Activated T-helper 1 cell treated with anti-CD3 and anti-CD28 coated beads, Interleukin-12 subunit alpha, Interleukin-12 subunit beta, Interleukin-2, Interleukin-4 antibody, amounts not matched to agents 30 ng/mL and 10 ng/mL and 1 ng/mL, durations not matched to agents 14 hours and 24 hours and 36 hours (primary cell): ENCODE measurements at regions of chrX and their contacts with region 1.

Region 1: GRCh38 chrX:1165535-1166196 is 46.8 kb downstream of the CRLF2 start:
- DNase-seq: peak; percentile 28
- H3K4me3 Mint-ChIP-seq: peak overlapping the region; percentile 28
- H3K27ac Mint-ChIP-seq: no peak overlapping the region
- H3K4me1 Mint-ChIP-seq: peaks cover 16% of the 10 kb centered on the region
- H3K27me3 Mint-ChIP-seq: peaks cover 2% of the 10 kb centered on the region

Region 2: DNA sequence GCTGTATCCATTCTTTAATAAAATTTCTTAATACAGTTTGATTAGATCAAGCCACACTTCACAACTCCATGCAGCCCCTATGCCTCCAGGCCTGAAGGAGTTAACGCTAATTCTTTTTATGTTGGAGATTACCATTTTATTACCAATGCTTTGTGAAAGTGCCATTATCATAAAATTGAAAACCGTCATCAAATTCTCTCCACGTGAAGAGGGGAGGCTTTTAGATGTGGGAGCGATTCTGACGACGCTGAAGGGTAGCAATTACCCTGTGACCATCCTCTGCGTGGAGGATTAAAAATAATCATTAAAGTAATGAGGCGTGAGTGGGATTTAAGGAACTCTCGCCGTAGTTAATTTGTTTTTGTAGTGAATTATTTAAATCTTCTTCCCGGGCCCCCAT is 232.1 kb before region 1 on chrX:
- intact Hi-C with region 1: loop called (anchors 5 kb)
- DNase-seq: no peak
- H3K4me3 Mint-ChIP-seq: no peak overlapping the region
- H3K27ac Mint-ChIP-seq: no peak overlapping the region
- H3K4me1 Mint-ChIP-seq: no peaks in the 10 kb centered on the region
- H3K27me3 Mint-ChIP-seq: no peaks in the 10 kb centered on the region

Region 3: GRCh38 chrX:1011642-1012283 is 153.9 kb before region 1 on chrX:
- intact Hi-C with region 1: loop called (anchors 10 kb)
- DNase-seq: no peak
- H3K4me3 Mint-ChIP-seq: no peak overlapping the region
- H3K27ac Mint-ChIP-seq: peak overlapping the region; percentile 19
- H3K4me1 Mint-ChIP-seq: no peaks in the 10 kb centered on the region
- H3K27me3 Mint-ChIP-seq: peaks cover 1% of the 10 kb centered on the region

Region 4: GRCh38 chrX:1072637-1073377 is 92.9 kb before region 1 on chrX:
- intact Hi-C with region 1: loop called (anchors 5 kb)
- DNase-seq: no peak
- H3K4me3 Mint-ChIP-seq: no peak overlapping the region
- H3K27ac Mint-ChIP-seq: no peak overlapping the region
- H3K4me1 Mint-ChIP-seq: peaks cover 6% of the 10 kb centered on the region
- H3K27me3 Mint-ChIP-seq: no peaks in the 10 kb centered on the region

Region 5: GRCh38 chrX:1205680-1206611 is 40.3 kb after region 1 on chrX:
- intact Hi-C with region 1: loop called (anchors 5 kb)
- DNase-seq: peak; percentile 32
- H3K4me3 Mint-ChIP-seq: peak overlapping the region; percentile 57
- H3K27ac Mint-ChIP-seq: no peak overlapping the region
- H3K4me1 Mint-ChIP-seq: peaks cover 31% of the 10 kb centered on the region
- H3K27me3 Mint-ChIP-seq: peaks cover 1% of the 10 kb centered on the region

Region 6: DNA sequence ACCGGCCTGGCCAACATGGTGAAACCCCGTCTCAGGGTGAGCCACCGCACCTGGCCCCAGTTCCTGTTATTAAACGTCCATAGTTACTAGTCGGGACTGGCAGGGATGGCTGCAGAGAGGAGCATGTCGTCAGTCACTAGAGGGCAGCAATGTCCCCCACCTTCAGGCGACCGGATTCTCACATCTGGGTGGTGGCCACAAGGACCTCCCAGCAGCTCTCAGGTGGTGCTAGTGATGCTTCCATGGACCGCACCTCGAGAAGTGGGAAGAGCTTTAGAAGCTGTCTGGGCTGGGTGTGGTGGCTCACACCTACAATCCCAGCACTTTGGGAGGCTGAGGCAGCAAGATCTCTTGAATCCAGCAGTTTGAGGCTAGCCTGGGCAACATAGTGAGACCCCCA is 157.6 kb after region 1 on chrX:
- intact Hi-C with region 1: loop called (anchors 5 kb)
- DNase-seq: peak; percentile 45
- H3K4me3 Mint-ChIP-seq: no peak overlapping the region
- H3K27ac Mint-ChIP-seq: peak overlapping the region; percentile 55
- H3K4me1 Mint-ChIP-seq: peaks cover 12% of the 10 kb centered on the region
- H3K27me3 Mint-ChIP-seq: peaks cover 5% of the 10 kb centered on the region

Region 7: GRCh38 chrX:1554469-1555210 is 389.0 kb after region 1 on chrX:
- intact Hi-C with region 1: no loop called
- DNase-seq: peak; percentile 42
- H3K4me3 Mint-ChIP-seq: peak overlapping the region; percentile 37
- H3K27ac Mint-ChIP-seq: peak overlapping the region; percentile 61
- H3K4me1 Mint-ChIP-seq: peaks cover 31% of the 10 kb centered on the region
- H3K27me3 Mint-ChIP-seq: peaks cover 2% of the 10 kb centered on the region